Panc1 (cell line): ENCODE measurements at regions of chr19 and their contacts with region 1.

Region 1: GRCh38 chr19:17148130-17148529 is 67.0 kb upstream of the USE1 start:
- DNase-seq: no peak
- ATAC-seq: no peak
- H3K4me3 ChIP-seq: no peak overlapping the region
- H3K27ac ChIP-seq: no peak overlapping the region
- H3K4me1 ChIP-seq: no peaks in the 10 kb centered on the region
- H3K27me3 ChIP-seq: no peaks in the 10 kb centered on the region
- CTCF ChIP-seq: no peak

Region 2: DNA sequence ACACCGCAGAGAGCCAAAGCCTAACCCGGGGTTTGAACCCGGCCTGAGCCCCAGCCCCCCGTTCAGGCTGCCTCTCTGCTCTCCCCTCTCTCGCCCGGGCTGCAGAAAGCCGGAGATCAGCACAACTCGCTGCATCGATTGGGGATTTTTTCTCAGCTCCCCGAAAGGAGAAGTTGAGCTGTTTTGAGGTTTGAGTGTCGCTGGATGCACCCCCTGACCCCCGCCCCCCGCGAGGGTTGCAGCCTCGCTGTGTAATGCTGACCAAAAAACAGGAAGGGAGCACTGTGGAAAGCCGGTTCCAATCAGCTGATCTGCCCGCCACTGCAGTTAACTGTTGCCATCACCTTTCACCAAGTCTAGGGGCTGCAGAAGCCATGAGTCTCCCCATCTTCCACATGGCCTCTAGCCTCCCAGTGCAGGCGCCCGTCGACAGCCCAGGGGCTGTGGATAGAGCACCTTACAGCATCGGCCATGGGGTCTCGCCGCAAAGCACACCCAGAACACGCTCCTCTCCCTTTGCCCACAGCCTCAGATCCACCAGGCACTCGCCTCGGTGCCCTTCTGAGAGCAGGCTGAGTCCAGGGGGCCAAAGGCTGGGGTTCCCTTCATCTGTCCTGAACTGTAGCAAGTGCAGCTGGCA is 38.0 kb before region 1 on chr19:
- CTCF ChIA-PET with region 1: no interaction called
- POLR2A ChIA-PET with region 1: interaction called, 17 read pairs
- in situ Hi-C with region 1: no loop called
- intact Hi-C with region 1: no loop called
- DNase-seq: no peak
- ATAC-seq: no peak
- H3K4me3 ChIP-seq: no peak overlapping the region
- H3K27ac ChIP-seq: no peak overlapping the region
- H3K4me1 ChIP-seq: peaks cover 17% of the 10 kb centered on the region
- H3K27me3 ChIP-seq: no peaks in the 10 kb centered on the region
- CTCF ChIP-seq: no peak